PC-3 (cell line): ENCODE measurements at regions of chr11 and their contacts with region 1.

Region 1: GRCh38 chr11:128146926-128147605 is 440.3 kb downstream of the ETS1 start:
- DNase-seq: peak; percentile 86
- ATAC-seq: peak; percentile 81
- H3K4me3 ChIP-seq: peak overlapping the region; percentile 4; the same call in 1 of the 2 replicates
- H3K27ac ChIP-seq: peak overlapping the region; percentile 45
- H3K4me1 ChIP-seq: peaks cover 27% of the 10 kb centered on the region
- H3K27me3 ChIP-seq: no peaks in the 10 kb centered on the region
- CTCF ChIP-seq: no peak

Region 2: GRCh38 chr11:128095466-128095981 is 51.5 kb before region 1 on chr11:
- CTCF ChIA-PET with region 1: no interaction called
- POLR2A ChIA-PET with region 1: no interaction called
- intact Hi-C with region 1: no loop called
- DNase-seq: peak; percentile 88
- ATAC-seq: peak; percentile 77
- H3K4me3 ChIP-seq: no peak overlapping the region
- H3K27ac ChIP-seq: peak overlapping the region; percentile 27
- H3K4me1 ChIP-seq: peaks cover 7% of the 10 kb centered on the region
- H3K27me3 ChIP-seq: 0 out of 2 replicates have a peak, but pooled peaks cover 12% of the 10 kb centered on the region
- CTCF ChIP-seq: peak; percentile 71

Region 3: DNA sequence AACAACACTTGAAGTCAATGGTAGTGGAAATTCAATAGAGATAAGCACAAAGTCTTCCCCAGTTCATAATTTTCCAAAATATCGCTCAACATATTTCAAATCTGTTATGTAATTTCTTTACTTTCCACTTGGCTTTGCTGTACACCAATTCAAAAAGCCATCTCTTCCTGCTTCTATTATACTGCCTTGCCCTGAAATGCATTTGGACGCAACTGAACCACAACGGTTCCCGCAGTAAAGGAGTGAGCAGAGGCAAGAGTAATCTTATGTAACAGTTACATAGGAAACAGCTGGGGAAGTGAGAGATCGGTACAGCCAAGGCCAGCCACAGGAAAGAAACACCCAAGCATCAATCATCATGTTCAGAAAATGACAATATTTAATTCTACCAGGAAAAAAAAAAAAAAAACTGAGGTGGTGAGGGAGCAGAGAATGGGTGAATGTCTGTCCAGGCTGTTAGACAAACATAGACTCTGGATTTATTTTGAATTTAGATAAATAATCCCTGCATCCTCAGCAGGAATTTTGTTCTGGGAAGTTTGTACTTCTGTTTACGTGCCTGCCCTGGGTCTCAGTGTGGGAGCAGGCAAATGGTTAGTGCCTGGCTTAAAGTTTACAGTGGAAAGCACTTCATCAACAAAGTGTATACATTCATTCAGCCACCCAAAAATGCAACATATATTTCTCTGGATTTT is 48.1 kb after region 1 on chr11:
- CTCF ChIA-PET with region 1: no interaction called
- POLR2A ChIA-PET with region 1: no interaction called
- intact Hi-C with region 1: no loop called
- DNase-seq: no peak
- ATAC-seq: no peak
- H3K4me3 ChIP-seq: no peak overlapping the region
- H3K27ac ChIP-seq: no peak overlapping the region
- H3K4me1 ChIP-seq: no peaks in the 10 kb centered on the region
- H3K27me3 ChIP-seq: no peaks in the 10 kb centered on the region
- CTCF ChIP-seq: no peak

Region 4: DNA sequence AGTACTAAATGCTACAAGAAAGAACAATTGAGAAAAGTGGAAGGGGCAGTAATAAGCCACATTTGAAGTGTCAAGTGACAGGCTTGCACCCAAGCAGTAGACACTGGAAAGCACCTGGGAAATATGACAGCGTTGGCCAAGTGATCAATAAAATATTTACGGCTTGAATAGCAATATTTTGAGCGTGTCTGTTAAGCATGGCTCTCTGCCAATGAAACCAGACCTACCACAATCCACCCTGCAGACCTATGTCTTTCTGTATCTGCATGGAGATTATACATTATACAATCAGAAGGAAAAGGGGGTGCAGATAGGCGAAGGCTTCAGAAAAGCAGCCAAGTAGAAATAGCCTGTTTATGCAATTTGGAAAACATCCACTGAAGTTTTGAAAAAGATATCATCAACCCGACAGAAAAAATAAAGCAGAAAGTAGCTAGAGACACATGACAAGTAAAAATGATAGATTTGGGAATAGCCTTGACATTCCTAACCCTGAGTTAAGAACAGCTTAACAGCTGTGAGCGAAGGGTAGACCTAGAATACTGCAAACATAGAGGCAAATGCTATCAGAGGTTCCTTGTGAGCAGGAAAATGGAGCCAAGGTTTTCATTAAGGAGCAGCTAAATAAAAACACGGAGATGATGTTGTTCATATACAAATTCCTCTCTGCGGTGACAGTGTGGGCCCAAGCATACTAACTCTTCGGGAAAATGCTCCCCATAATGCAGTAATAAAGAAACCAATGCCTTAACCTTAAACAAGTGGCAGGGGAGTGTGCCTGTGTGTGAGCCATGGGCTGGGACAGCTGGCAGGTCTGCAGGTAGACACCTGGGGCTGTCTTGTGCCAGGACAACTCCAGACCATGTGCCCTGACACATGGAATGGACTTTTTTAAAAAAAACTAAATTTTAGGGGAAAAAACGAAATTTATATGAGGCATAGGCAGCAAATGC is 369.0 kb after region 1 on chr11:
- CTCF ChIA-PET with region 1: interaction called, 11 read pairs
- POLR2A ChIA-PET with region 1: no interaction called
- intact Hi-C with region 1: no loop called
- DNase-seq: no peak
- ATAC-seq: no peak
- H3K4me3 ChIP-seq: peak overlapping the region; percentile 77
- H3K27ac ChIP-seq: no peak overlapping the region
- H3K4me1 ChIP-seq: peaks cover 60% of the 10 kb centered on the region
- H3K27me3 ChIP-seq: no peaks in the 10 kb centered on the region
- CTCF ChIP-seq: no peak